Activated CD8-positive, alpha-beta T cell treated with anti-CD3 and anti-CD28 coated beads, Interleukin-2, amount 10 ng/mL, durations not matched to agents 7 days and 5 days (primary cell): ENCODE measurements at regions of chr4 and their contacts with region 1.

Region 1: DNA sequence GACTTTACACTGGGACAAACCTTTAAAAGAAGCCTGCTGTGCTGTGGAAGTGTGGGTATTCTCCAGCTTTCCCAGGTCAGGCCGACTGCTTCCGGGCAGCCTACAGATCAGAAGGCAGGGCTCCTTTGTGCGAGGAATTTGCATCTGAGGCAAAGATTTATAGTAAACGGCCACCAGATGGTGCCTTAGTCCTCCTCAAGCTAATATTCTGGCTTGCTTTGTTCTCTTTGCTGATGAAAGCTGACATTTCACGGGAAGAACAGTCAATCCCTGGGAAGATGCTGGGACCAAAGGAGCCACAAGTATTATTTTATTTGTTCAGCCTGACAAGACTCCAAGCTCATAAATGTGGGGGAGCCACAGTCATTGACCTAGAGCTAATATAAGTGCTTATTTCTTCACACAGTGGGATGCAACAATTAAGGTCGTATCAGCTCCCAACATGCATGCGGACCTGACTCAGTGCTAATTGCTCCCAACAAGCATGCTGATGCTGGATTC is 120.7 kb upstream of the TRIM2 start:
- DNase-seq: peak; percentile 68
- ATAC-seq: peak; percentile 61
- H3K4me3 Mint-ChIP-seq: no peak overlapping the region
- H3K27ac Mint-ChIP-seq: peak overlapping the region; percentile 60
- H3K4me1 Mint-ChIP-seq: peaks cover 62% of the 10 kb centered on the region
- H3K27me3 Mint-ChIP-seq: peaks cover 28% of the 10 kb centered on the region

Region 2: GRCh38 chr4:152779513-152780266 is 303.8 kb before region 1 on chr4 and contains the starts of genes ARFIP1 and TIGD4:
- CTCF ChIA-PET with region 1: interaction called, 10 read pairs
- POLR2A ChIA-PET with region 1: no interaction called
- DNase-seq: peak; percentile 97
- ATAC-seq: peak; percentile 90
- H3K4me3 Mint-ChIP-seq: peak within 1 kb of the TSS; percentile 92
- H3K27ac Mint-ChIP-seq: peak within 1 kb of the TSS; percentile 90
- H3K4me1 Mint-ChIP-seq: peaks cover 40% of the 10 kb centered on the region
- H3K27me3 Mint-ChIP-seq: peaks cover 12% of the 10 kb centered on the region
- total RNA-seq, gene ARFIP1: 20.3 to 20.5 TPM
- total RNA-seq, gene TIGD4: 0.40 to 0.44 TPM

Region 3: GRCh38 chr4:152850377-152850776 is 233.1 kb before region 1 on chr4:
- CTCF ChIA-PET with region 1: interaction called, 46 read pairs
- POLR2A ChIA-PET with region 1: no interaction called
- DNase-seq: peak; percentile 56
- ATAC-seq: peak; percentile 36
- H3K4me3 Mint-ChIP-seq: no peak overlapping the region
- H3K27ac Mint-ChIP-seq: no peak overlapping the region
- H3K4me1 Mint-ChIP-seq: peaks cover 20% of the 10 kb centered on the region
- H3K27me3 Mint-ChIP-seq: no peaks in the 10 kb centered on the region

Region 4: GRCh38 chr4:153095448-153096204 is 12.1 kb after region 1 on chr4:
- CTCF ChIA-PET with region 1: interaction called, 79 read pairs
- POLR2A ChIA-PET with region 1: interaction called, 3 read pairs
- DNase-seq: no peak
- ATAC-seq: no peak
- H3K4me3 Mint-ChIP-seq: no peak overlapping the region
- H3K27ac Mint-ChIP-seq: no peak overlapping the region
- H3K4me1 Mint-ChIP-seq: peaks cover 1% of the 10 kb centered on the region
- H3K27me3 Mint-ChIP-seq: peaks cover 17% of the 10 kb centered on the region

Region 5: GRCh38 chr4:153107246-153107645 is 23.7 kb after region 1 on chr4:
- CTCF ChIA-PET with region 1: interaction called, 82 read pairs
- POLR2A ChIA-PET with region 1: no interaction called
- DNase-seq: no peak
- ATAC-seq: no peak
- H3K4me3 Mint-ChIP-seq: no peak overlapping the region
- H3K27ac Mint-ChIP-seq: no peak overlapping the region
- H3K4me1 Mint-ChIP-seq: peaks cover 7% of the 10 kb centered on the region
- H3K27me3 Mint-ChIP-seq: peaks cover 71% of the 10 kb centered on the region

Region 6: DNA sequence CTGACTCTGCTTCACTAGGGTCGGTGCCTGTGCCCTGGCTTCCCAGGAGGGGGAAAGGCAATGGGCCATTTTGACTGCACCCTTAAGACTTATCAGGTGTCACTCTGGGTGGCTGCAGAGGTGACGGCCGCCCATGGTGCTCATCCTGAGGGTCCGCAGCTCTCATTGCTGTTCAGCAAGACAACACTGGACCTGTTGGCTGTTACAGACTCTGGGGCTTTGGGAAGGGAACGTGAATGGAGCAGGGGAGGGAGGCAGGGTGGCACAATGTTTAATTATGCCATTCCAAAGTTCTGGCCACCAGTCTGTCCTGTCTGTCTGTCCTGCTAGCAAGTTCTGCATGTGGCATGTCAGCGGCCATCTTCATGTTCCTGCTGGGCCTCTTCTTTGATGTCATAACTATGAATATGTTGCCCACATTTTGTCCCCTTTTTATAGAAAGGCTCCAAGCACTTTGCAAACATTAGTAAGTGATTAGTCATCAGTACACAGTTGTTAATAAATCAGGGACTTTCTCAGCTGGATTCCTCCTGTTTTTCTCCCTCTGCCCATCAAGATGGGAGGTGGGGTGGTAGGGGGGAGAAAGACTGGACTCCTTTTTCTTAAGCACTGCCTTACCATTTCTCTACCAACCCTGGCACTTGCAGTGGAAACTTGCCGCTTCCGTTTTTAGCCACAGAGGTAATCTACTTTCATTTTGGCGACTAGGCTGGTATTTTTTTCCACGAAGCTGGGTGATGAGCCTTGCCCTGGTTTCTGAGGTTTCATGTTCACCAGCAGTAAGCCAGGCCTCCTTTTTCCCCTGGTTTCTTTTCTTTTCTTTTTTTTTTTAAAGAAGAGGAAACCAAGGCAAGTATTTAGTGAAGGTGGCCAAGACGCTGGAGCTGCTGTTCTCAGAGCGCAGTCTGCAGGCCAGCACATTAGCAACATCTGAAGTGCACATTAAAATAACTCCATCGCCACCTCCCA is 32.1 kb after region 1 on chr4:
- CTCF ChIA-PET with region 1: interaction called, 82 read pairs
- POLR2A ChIA-PET with region 1: interaction called, 3 read pairs
- DNase-seq: peak; percentile 88
- ATAC-seq: peak; percentile 76
- H3K4me3 Mint-ChIP-seq: peak overlapping the region; percentile 37
- H3K27ac Mint-ChIP-seq: no peak overlapping the region
- H3K4me1 Mint-ChIP-seq: peaks cover 6% of the 10 kb centered on the region
- H3K27me3 Mint-ChIP-seq: peaks cover 20% of the 10 kb centered on the region